ENCODE measurements at regions of chr7 and their contacts with region 1.

Region 1: DNA sequence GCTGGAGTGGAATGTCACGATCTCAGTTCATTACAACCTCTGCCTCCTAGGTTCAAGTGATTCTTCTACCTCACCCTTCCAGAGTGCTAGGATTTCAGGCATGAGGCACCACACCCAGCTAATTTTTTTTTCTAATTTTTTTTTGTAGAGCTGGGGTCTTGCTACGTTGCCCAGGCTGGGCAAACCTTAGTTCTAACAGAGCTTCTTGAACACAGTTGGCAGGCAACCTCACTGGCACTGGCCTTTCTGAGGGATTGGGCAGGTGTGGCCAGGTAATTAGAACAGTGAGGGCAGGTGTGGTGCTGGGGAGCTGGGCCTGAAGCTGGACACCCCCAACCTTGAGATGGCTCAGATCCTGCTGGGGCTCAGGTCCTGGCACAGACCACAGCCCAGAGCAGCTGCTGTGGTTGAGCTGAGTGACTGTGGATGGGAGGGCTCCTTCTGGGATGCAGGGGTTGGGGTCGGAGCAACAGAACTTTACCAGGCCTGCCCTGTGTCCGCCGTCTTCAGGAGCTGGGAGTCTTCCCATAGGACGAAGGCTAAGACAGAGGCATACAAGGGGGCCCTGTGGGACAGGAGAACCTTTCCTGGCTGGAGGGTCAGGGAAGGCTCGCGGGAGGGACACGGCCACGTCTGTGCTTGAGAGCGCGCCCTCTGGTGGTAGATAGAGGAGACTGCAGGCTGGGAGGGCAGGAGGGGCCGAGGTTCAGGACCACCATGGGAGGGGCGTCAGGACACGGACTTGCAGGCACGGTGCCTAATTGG is 48.2 kb downstream of the COL26A1 start:
- DNase-seq: peak in 7 of 9 donors; percentile 27 to 55 (median 33)
- ATAC-seq: peak; percentile 64
- H3K4me3 ChIP-seq: no peak overlapping the region
- H3K4me3 Mint-ChIP-seq: peak overlapping the region in 5 of 10 donors; percentile 40 to 74 (median 55)
- H3K27ac ChIP-seq: no peak overlapping the region
- H3K27ac Mint-ChIP-seq: no peak overlapping the region
- H3K4me1 ChIP-seq: no peaks in the 10 kb centered on the region
- H3K4me1 Mint-ChIP-seq: peaks cover 5 to 11% (median 7%) of the 10 kb centered on the region in 7 donors
- H3K27me3 ChIP-seq: no peaks in the 10 kb centered on the region
- H3K27me3 Mint-ChIP-seq: peaks cover 0 to 9% (median 4%) of the 10 kb centered on the region in 5 donors

Region 2: DNA sequence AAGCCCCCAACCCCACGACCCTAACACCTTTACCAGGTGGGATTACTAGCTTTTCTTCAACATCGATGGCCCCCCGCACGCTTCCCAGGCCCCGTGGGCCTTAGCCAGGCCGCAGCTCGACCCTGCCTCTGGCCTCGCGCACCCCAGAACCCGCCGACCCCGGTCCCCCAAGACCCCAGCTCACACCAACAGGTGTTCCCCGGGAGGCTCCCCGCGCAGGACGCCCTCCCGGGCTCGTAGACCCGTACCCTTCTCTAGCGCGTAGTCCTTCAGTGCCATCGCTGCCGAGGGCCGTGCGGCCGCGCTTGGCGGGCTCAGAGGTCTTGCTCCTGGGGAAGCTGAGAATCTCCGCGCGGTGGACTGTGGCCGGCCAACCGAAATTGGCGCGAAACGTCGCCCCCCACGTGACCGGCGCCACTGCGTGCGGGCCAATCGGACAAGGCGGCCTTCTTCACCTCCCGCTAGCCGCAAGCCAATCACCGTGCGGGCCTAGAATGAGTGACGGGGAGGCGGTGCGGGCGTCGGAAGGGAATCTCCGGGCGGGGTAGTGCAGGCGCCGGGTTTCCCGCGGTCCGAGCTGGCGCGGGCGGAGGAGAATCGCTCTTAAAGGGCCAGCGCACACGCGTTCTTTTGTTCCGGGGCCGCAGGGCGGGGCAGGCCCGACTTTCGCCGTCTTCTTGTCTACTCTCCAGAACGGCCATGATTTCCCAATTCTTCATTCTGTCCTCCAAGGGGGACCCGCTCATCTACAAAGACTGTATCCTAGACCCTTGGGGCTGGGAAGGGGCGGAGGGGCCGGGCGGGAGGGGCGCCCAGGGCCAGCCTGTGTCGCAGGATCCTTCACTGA is 1309.7 kb before region 1 on chr7 and contains the starts of genes AP4M1 and MCM7:
- CTCF ChIA-PET with region 1: no interaction called
- POLR2A ChIA-PET with region 1: no interaction called
- intact Hi-C with region 1: no loop called
- DNase-seq: peak; percentile 84 to 98 (median 93)
- ATAC-seq: peak; percentile 90
- H3K4me3 ChIP-seq: peak within 1 kb of the TSS; percentile 98
- H3K4me3 Mint-ChIP-seq: peak within 1 kb of the TSS; percentile 85 to 95 (median 93)
- H3K27ac ChIP-seq: peak within 1 kb of the TSS; percentile 91
- H3K27ac Mint-ChIP-seq: peak within 1 kb of the TSS; percentile 90 to 98 (median 96)
- H3K4me1 ChIP-seq: peaks cover 17 to 25% of the 10 kb centered on the region in 2 donors
- H3K4me1 Mint-ChIP-seq: peaks cover 27 to 47% (median 41%) of the 10 kb centered on the region in 7 donors
- H3K27me3 ChIP-seq: no peaks in the 10 kb centered on the region
- H3K27me3 Mint-ChIP-seq: no peaks in the 10 kb centered on the region
- total RNA-seq, gene AP4M1: 7.5 to 13.8 (median 11.0) TPM
- total RNA-seq, gene MCM7: 80.3 to 263 (median 168) TPM

Region 3: GRCh38 chr7:100407285-100408180 is 1003.4 kb before region 1 on chr7:
- CTCF ChIA-PET with region 1: no interaction called
- POLR2A ChIA-PET with region 1: no interaction called
- intact Hi-C with region 1: no loop called
- DNase-seq: peak in 7 of 9 donors; percentile 35 to 69 (median 53)
- ATAC-seq: peak; percentile 97
- H3K4me3 ChIP-seq: no peak overlapping the region
- H3K4me3 Mint-ChIP-seq: no peak overlapping the region
- H3K27ac ChIP-seq: no peak overlapping the region
- H3K27ac Mint-ChIP-seq: peak overlapping the region in 1 of 9 donors; percentile 65
- H3K4me1 ChIP-seq: no peaks in the 10 kb centered on the region
- H3K4me1 Mint-ChIP-seq: peaks cover 0 to 5% (median 2%) of the 10 kb centered on the region in 7 donors
- H3K27me3 ChIP-seq: no peaks in the 10 kb centered on the region
- H3K27me3 Mint-ChIP-seq: peaks cover 0 to 32% (median 0%) of the 10 kb centered on the region in 5 donors

Region 4: DNA sequence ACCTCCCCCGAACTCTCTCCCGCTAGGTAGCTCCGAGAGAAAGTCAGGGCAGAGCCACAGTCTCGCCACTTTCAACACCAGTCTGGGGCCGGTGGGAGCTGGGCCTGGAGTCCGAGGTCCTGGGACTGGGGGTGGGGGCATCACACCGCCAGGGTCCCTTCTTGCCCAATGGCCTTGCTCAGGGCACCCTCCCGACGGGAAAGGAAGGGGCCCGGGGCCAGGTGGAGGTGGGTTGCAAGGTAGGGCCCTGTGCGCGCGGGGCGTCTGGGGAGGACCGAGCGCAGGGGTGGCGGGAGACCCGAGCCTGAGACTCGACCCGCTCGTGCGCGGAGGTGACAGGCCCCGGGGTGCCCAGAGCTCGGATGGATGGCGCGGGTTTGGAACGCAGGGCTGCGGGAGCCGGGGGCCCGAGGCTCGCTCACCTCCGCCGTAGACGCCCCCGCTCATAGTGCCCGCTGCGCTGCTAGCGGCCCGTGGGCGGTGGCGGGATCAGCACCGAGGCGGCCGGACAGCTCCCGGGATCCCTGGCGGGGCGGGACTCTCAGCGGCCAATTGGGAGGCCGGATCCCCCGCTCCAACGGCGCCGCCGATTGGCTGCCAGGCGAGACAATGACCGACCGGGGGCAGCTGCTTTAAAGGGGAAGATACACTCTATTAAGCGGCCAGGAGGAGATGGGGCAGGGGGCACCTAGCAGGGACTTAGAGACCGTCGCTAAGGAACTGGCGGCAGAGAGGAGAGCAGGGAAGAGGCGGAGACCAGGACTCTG is 754.8 kb before region 1 on chr7 and contains the start of gene ACTL6B:
- CTCF ChIA-PET with region 1: no interaction called
- POLR2A ChIA-PET with region 1: no interaction called
- intact Hi-C with region 1: no loop called
- DNase-seq: peak in 8 of 9 donors; percentile 40 to 83 (median 52)
- ATAC-seq: peak; percentile 84
- H3K4me3 ChIP-seq: no peak within 1 kb of the TSS
- H3K4me3 Mint-ChIP-seq: peak within 1 kb of the TSS in 1 of 10 donors; percentile 49
- H3K27ac ChIP-seq: no peak within 1 kb of the TSS
- H3K27ac Mint-ChIP-seq: no peak within 1 kb of the TSS
- H3K4me1 ChIP-seq: no peaks in the 10 kb centered on the region
- H3K4me1 Mint-ChIP-seq: peaks cover 0 to 6% (median 0%) of the 10 kb centered on the region in 7 donors
- H3K27me3 ChIP-seq: peaks cover 3 to 14% of the 10 kb centered on the region in 2 donors
- H3K27me3 Mint-ChIP-seq: peaks cover 26 to 57% (median 35%) of the 10 kb centered on the region in 5 donors
- total RNA-seq, gene ACTL6B: not detected

Region 5: DNA sequence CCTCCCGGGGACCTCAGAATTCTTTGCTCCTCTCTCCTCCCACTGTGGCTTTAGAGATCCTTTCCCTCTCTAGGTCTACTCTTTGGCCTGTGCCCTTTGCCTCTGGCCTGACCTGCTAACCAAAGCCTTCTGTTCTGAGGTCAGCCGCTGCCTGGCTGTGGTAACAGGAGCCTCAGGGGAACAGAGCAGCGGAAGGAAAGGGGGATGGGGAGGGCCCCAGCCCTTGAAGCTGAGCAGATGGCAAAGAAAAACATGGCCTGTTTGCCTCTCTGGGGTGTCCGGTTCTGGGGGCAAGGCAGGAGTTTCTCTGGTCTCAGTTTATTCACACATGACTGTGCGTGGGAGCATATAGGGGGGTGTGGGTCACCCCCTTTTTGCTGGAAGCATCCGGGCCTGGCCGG is 20.0 kb before region 1 on chr7:
- CTCF ChIA-PET with region 1: interaction called, 3 read pairs
- POLR2A ChIA-PET with region 1: no interaction called
- intact Hi-C with region 1: loop called in 1 of 2 experiments (anchors 2 kb)
- DNase-seq: peak in 7 of 9 donors; percentile 15 to 45 (median 38)
- ATAC-seq: peak; percentile 64
- H3K4me3 ChIP-seq: no peak overlapping the region
- H3K4me3 Mint-ChIP-seq: peak overlapping the region; percentile 59 to 83 (median 76)
- H3K27ac ChIP-seq: peak overlapping the region; percentile 19
- H3K27ac Mint-ChIP-seq: peak overlapping the region; percentile 76 to 95 (median 89)
- H3K4me1 ChIP-seq: peaks cover 0 to 30% of the 10 kb centered on the region in 2 donors
- H3K4me1 Mint-ChIP-seq: peaks cover 18 to 43% (median 36%) of the 10 kb centered on the region in 7 donors
- H3K27me3 ChIP-seq: no peaks in the 10 kb centered on the region
- H3K27me3 Mint-ChIP-seq: peaks cover 0 to 15% (median 0%) of the 10 kb centered on the region in 5 donors

Measured in naive thymus-derived CD4-positive, alpha-beta T cell (primary cell).